AG04450 (cell line): ENCODE measurements at regions of chr9 and their contacts with region 1.

Region 1: DNA sequence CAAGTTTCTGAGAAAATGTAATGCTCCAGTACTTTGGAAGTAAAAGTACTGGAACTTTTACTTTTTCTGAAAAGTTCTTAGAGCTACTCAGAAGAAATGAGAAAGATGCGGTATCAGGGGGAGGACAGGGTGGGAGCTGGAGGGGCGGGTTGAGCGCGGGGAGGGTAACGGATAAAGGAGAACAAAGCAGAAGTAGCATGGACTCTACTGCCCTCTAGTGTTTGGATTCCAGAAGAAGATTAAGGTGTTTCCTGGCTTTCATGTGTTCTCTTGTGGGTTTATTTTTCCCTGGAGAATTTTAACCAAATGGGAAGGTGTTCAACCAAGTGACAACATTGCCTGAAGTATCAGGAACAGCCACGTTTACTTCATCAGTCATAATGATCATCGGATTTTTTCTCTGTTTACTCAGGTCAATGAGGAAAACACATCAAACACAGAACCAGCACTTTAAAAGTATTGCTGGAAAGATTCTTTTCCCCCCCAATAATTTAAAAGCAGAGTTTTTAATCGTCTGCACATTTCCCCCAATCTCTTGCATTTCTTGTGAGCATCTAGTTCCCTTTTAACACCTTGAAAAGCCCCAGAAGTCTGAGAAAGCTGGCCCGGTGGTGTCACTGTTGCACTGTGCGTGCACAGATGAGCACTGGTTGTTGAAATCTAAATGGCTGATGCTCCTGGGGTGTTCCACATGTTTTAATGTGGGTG is 190.6 kb downstream of the MPDZ start:
- DNase-seq: peak; percentile 13
- H3K4me3 ChIP-seq: no peak overlapping the region
- H3K27ac ChIP-seq: no peak overlapping the region
- H3K27me3 ChIP-seq: no peaks in the 10 kb centered on the region
- CTCF ChIP-seq: peak; percentile 71

Region 2: DNA sequence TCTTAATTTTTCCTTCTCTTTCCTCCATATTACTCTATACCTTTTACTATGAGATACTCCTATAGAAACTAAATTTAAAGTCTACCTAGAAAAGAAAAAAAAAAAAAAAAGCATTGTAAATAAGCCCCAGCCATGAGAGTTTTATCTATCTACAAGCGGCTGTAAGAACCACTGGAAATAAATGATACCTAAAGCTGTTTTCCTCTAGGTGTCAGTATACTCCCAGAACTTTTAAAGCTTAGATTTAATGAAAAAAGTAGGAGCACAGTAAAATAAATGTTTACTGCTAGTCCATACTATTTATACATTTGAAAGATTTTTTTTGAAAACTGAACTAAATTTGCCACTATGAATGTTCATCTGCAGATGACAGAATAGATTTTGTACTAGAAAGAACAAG is 369.4 kb before region 1 on chr9:
- CTCF ChIA-PET with region 1: interaction called, 54 read pairs
- POLR2A ChIA-PET with region 1: no interaction called
- DNase-seq: no peak
- H3K4me3 ChIP-seq: no peak overlapping the region
- H3K27ac ChIP-seq: no peak overlapping the region
- H3K27me3 ChIP-seq: no peaks in the 10 kb centered on the region
- CTCF ChIP-seq: peak; percentile 62

Region 3: DNA sequence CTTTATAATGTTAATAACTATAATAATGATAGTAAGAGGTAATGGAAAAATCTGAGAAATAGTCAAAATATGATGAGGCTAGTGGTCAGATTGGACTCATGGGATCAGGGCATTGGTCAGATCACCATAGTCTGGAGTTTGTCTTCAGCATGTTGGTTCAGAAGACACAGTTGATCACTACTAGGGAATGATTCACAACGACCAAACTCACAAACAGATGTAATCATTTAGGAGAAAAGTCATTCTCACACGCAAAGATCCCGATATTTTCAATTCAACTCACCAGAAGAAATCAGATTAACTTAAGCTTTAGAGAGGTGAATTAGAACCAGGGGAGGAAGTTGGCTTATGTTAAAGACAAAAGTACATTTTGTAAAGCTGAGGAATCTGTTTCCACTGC is 182.2 kb before region 1 on chr9:
- CTCF ChIA-PET with region 1: no interaction called
- POLR2A ChIA-PET with region 1: no interaction called
- DNase-seq: no peak
- H3K4me3 ChIP-seq: no peak overlapping the region
- H3K27ac ChIP-seq: no peak overlapping the region
- H3K27me3 ChIP-seq: no peaks in the 10 kb centered on the region
- CTCF ChIP-seq: no peak

Region 4: GRCh38 chr9:13033959-13034693 is 54.7 kb before region 1 on chr9:
- CTCF ChIA-PET with region 1: interaction called, 60 read pairs
- POLR2A ChIA-PET with region 1: no interaction called
- DNase-seq: peak; percentile 13
- H3K4me3 ChIP-seq: peak overlapping the region; percentile 51
- H3K27ac ChIP-seq: no peak overlapping the region
- H3K27me3 ChIP-seq: no peaks in the 10 kb centered on the region
- CTCF ChIP-seq: peak; percentile 86

Region 5: GRCh38 chr9:13110766-13111417 is 22.0 kb after region 1 on chr9:
- CTCF ChIA-PET with region 1: interaction called, 16 read pairs
- POLR2A ChIA-PET with region 1: no interaction called
- DNase-seq: no peak
- H3K4me3 ChIP-seq: no peak overlapping the region
- H3K27ac ChIP-seq: no peak overlapping the region
- H3K27me3 ChIP-seq: no peaks in the 10 kb centered on the region
- CTCF ChIP-seq: no peak

Region 6: DNA sequence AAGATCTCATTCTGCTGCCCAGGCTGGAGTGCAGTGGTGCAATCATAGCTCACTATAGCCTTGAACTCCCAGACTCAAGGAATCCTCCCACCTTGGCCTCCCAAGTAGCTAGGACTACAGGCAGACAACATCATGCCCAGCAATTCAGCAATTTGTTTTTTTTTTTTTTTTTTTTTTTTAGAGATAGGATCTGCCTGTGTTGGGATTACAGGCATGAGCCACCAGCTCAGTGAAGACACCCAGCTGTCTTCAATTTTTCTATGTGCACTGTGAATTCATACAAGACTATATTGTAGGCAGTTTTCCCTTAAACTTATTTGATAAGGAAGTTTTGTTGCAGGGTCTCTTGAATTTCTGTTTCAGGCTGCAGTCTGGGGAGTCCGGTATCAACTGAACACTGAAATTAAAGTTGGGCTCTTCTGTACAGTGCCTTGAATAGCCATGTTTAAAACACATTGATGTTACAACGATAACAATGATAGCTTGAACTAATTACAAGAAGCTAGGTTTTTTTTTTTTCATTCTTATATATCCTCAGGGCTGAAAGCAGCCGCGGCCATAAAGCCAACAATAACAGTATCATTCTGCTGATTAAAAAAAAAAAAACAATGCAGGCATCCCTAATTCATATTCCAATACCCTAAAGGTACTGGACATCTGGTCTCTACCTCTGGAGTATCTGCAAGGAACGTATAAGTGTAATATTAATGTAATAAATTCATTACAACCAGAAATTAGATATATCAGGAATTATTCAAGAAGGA is 127.1 kb after region 1 on chr9:
- CTCF ChIA-PET with region 1: interaction called, 11 read pairs
- POLR2A ChIA-PET with region 1: no interaction called
- DNase-seq: no peak
- H3K4me3 ChIP-seq: no peak overlapping the region
- H3K27ac ChIP-seq: no peak overlapping the region
- H3K27me3 ChIP-seq: no peaks in the 10 kb centered on the region
- CTCF ChIP-seq: no peak

Region 7: DNA sequence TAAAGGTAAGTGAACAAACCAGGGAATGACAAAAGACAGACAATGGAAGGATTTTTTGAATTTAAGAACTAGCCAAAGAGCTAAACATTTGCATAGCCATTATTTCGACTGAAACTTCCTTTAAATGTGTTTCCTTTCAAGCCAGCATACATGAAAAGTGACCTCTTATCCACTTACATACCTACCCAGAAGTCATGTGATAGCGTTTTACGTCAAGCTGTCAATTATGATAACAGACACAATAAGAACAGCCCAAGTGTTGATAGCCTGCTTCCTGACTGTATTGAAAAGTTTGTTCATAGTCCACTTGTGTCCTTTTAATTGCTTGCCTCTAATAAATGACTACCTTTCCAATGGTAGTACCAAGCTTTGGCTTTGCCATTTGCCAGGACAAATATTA is 1019.1 kb after region 1 on chr9:
- CTCF ChIA-PET with region 1: no interaction called
- POLR2A ChIA-PET with region 1: no interaction called
- DNase-seq: no peak
- H3K4me3 ChIP-seq: no peak overlapping the region
- H3K27ac ChIP-seq: no peak overlapping the region
- H3K27me3 ChIP-seq: no peaks in the 10 kb centered on the region
- CTCF ChIP-seq: no peak